ENCODE measurements at regions of chr16 and their contacts with region 1.

Region 1: GRCh38 chr16:23803591-23804123 is 32.1 kb upstream of the PRKCB start:
- DNase-seq: peak; percentile 91
- H3K4me3 ChIP-seq: peak overlapping the region; percentile 9
- H3K27ac ChIP-seq: peak overlapping the region; percentile 31
- H3K4me1 ChIP-seq: peaks cover 17% of the 10 kb centered on the region
- H3K27me3 ChIP-seq: no peaks in the 10 kb centered on the region
- CTCF ChIP-seq: peak; percentile 87

Region 2: GRCh38 chr16:23835390-23836077 is 31.9 kb after region 1 on chr16 and contains the start of gene PRKCB:
- CTCF ChIA-PET with region 1: no interaction called
- POLR2A ChIA-PET with region 1: interaction called, 10 read pairs
- intact Hi-C with region 1: loop called (anchors 2 kb)
- DNase-seq: peak; percentile 92
- H3K4me3 ChIP-seq: peak within 1 kb of the TSS; percentile 87
- H3K27ac ChIP-seq: peak within 1 kb of the TSS; percentile 68
- H3K4me1 ChIP-seq: peaks cover 28% of the 10 kb centered on the region
- H3K27me3 ChIP-seq: no peaks in the 10 kb centered on the region
- CTCF ChIP-seq: no peak
- total RNA-seq, gene PRKCB: 158 and 171 TPM in 2 replicates

Region 3: DNA sequence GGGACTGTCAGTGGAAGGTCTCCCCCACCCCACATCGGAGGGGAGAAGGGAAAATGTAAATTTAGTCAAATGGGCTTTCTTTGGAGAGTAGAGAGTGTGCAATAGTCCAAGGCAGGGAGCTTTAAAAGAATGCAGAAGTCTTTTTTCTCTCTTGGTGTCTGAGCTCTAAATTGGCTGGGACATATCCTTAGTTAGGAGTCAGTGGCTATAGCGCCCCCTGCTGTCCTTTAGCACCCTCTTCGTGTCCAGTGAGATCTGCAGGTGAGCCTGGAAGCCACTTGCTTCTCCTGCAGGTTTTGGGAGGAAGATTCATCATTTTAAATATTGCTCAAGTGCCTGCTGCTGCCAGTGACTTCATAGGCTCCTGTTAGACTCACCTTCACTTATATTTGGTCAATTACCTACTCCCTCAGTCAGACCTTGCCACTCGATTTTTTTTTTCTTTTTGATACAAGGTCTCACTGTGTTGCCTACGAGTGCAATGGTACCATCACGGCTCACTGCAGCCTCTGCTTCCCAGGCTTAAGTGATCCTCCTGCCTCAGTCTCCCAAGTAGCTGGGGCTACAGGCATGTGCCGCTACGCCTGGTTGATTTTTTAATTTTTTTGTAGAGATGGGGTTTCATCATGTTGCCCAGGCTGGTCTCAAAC is 206.9 kb after region 1 on chr16:
- CTCF ChIA-PET with region 1: interaction called, 17 read pairs
- POLR2A ChIA-PET with region 1: no interaction called
- intact Hi-C with region 1: loop called (anchors 2 kb)
- DNase-seq: peak; percentile 90
- H3K4me3 ChIP-seq: no peak overlapping the region
- H3K27ac ChIP-seq: peak overlapping the region; percentile 50
- H3K4me1 ChIP-seq: peaks cover 59% of the 10 kb centered on the region
- H3K27me3 ChIP-seq: no peaks in the 10 kb centered on the region
- CTCF ChIP-seq: peak; percentile 90

Region 4: GRCh38 chr16:24036614-24037013 is 233.0 kb after region 1 on chr16:
- CTCF ChIA-PET with region 1: interaction called, 14 read pairs
- POLR2A ChIA-PET with region 1: no interaction called
- intact Hi-C with region 1: loop called (anchors 1 kb)
- DNase-seq: peak; percentile 88
- H3K4me3 ChIP-seq: no peak overlapping the region
- H3K27ac ChIP-seq: peak overlapping the region; percentile 57
- H3K4me1 ChIP-seq: peaks cover 22% of the 10 kb centered on the region
- H3K27me3 ChIP-seq: no peaks in the 10 kb centered on the region
- CTCF ChIP-seq: peak; percentile 78

Measured in A673 (cell line).